MCF 10A (cell line): ENCODE measurements at regions of chr4 and their contacts with region 1.

Region 1: DNA sequence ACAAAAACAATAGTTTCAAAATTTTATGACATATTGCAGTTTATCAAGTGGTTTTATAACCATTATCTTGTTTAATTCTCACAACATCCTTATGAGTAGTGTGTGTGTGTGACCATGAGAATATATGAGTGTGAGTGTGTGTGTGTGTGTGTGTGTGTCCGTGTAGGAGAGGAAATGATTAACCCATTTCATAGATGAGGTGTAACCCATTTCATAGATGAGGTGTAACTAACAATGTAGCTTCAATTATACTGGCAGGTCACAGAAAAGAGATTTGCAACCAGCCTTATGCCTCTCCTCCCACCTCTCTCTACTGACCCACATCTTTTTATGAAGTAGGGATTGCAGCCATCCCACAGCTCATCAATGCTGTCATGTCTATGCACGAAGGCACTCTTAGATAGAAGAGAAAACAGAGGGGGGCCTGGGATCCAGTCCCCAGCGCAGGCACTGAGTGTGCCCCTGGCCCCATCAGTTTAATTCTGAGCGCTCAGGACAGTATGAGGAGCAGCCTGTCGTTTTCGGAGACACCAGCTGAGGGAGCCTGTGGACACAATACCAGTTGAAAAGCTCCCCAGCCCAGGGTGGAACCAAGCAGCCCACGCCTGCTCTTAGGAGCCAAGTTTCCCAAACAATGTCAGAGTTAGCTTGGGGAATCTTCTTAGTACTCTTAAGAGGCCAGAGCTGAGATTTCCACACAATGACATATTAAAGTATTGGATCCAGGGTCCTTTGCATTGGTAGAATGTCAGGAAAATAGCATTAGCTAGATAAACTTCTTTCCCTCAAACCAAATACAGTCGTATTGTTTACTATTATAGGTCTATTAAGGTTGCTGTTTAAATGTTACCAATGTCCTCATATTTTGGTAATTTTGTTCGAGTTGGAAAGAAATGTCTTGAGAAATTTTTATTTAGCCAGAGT is 88.6 kb downstream of the PALLD start:
- DNase-seq: peak; percentile 89
- H3K4me3 Mint-ChIP-seq: no peak overlapping the region
- H3K27ac Mint-ChIP-seq: no peak overlapping the region
- H3K4me1 Mint-ChIP-seq: peaks cover 45% of the 10 kb centered on the region
- H3K27me3 Mint-ChIP-seq: no peaks in the 10 kb centered on the region
- CTCF ChIP-seq: peak; percentile 84

Region 2: DNA sequence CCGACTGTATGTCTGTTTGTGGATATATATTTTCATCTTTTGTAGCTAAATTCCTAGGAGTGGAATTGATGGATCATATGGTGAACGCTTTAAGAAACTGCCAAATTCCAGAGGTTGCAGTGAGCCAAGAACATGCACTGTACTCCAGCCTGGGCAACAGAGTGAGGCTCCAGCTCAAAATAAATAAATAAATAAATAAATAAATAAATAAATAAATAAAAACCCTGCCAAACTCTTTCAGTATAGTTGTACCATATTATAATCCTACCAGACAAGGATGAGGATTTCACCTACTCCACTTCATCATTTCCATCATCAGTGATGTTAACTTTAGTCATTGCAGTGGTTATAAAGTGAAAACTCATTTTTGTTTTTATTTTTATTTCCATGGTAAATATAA is 818.1 kb before region 1 on chr4:
- CTCF ChIA-PET with region 1: no interaction called
- POLR2A ChIA-PET with region 1: no interaction called
- intact Hi-C with region 1: no loop called
- DNase-seq: no peak
- H3K4me3 Mint-ChIP-seq: no peak overlapping the region
- H3K27ac Mint-ChIP-seq: no peak overlapping the region
- H3K4me1 Mint-ChIP-seq: no peaks in the 10 kb centered on the region
- H3K27me3 Mint-ChIP-seq: no peaks in the 10 kb centered on the region
- CTCF ChIP-seq: no peak

Region 3: GRCh38 chr4:168098257-168098717 is 487.1 kb before region 1 on chr4:
- CTCF ChIA-PET with region 1: no interaction called
- POLR2A ChIA-PET with region 1: no interaction called
- intact Hi-C with region 1: no loop called
- DNase-seq: peak; percentile 52
- H3K4me3 Mint-ChIP-seq: no peak overlapping the region
- H3K27ac Mint-ChIP-seq: no peak overlapping the region
- H3K4me1 Mint-ChIP-seq: peaks cover 7% of the 10 kb centered on the region
- H3K27me3 Mint-ChIP-seq: no peaks in the 10 kb centered on the region
- CTCF ChIP-seq: no peak

Region 4: GRCh38 chr4:168499241-168499640 is 86.2 kb before region 1 on chr4:
- CTCF ChIA-PET with region 1: no interaction called
- POLR2A ChIA-PET with region 1: no interaction called
- intact Hi-C with region 1: no loop called
- DNase-seq: no peak
- H3K4me3 Mint-ChIP-seq: no peak overlapping the region
- H3K27ac Mint-ChIP-seq: no peak overlapping the region
- H3K4me1 Mint-ChIP-seq: peaks cover 5% of the 10 kb centered on the region
- H3K27me3 Mint-ChIP-seq: no peaks in the 10 kb centered on the region
- CTCF ChIP-seq: no peak

Region 5: GRCh38 chr4:168560184-168560827 is 25.1 kb before region 1 on chr4:
- CTCF ChIA-PET with region 1: interaction called, 12 read pairs
- POLR2A ChIA-PET with region 1: no interaction called
- intact Hi-C with region 1: no loop called
- DNase-seq: peak; percentile 33
- H3K4me3 Mint-ChIP-seq: no peak overlapping the region
- H3K27ac Mint-ChIP-seq: no peak overlapping the region
- H3K4me1 Mint-ChIP-seq: peaks cover 20% of the 10 kb centered on the region
- H3K27me3 Mint-ChIP-seq: no peaks in the 10 kb centered on the region
- CTCF ChIP-seq: no peak

Region 6: GRCh38 chr4:168631241-168632162 is 46.1 kb after region 1 on chr4:
- CTCF ChIA-PET with region 1: interaction called, 31 read pairs
- POLR2A ChIA-PET with region 1: interaction called, 44 read pairs
- intact Hi-C with region 1: loop called (anchors 1 kb)
- DNase-seq: peak; percentile 69
- H3K4me3 Mint-ChIP-seq: peak overlapping the region; percentile 79
- H3K27ac Mint-ChIP-seq: peak overlapping the region; percentile 24
- H3K4me1 Mint-ChIP-seq: peaks cover 41% of the 10 kb centered on the region
- H3K27me3 Mint-ChIP-seq: no peaks in the 10 kb centered on the region
- CTCF ChIP-seq: peak; percentile 26

Region 7: DNA sequence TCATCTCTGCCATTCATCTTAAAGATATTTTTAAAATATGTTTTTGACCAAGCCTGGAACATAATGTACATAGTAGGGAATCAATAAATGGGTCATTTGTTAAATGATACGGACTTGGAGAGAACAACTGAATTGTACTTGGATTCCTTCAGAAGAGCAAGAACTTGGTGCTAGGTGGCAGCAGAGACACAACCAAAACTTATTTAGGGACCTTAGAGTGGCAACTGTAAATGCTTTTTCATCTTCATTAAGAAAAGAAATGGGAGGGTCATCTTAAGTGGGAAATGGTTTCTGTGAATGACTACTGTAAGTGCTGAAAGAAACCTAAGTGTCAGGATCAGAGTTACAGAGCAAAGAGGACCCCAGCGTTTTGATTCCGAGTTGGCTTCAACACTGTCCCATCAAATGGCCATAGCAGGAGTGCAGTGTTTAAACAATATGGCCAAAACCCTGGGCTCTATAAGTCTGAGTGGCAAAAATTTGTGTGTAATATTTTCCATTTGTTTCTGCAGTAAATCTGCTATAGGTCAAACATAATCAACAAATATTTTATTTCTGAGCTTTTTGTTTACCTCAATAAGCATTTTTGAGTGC is 125.0 kb after region 1 on chr4:
- CTCF ChIA-PET with region 1: interaction called, 33 read pairs
- POLR2A ChIA-PET with region 1: interaction called, 3 read pairs
- intact Hi-C with region 1: loop called (anchors 1 kb)
- DNase-seq: peak; percentile 58
- H3K4me3 Mint-ChIP-seq: no peak overlapping the region
- H3K27ac Mint-ChIP-seq: peak overlapping the region; percentile 46
- H3K4me1 Mint-ChIP-seq: peaks cover 16% of the 10 kb centered on the region
- H3K27me3 Mint-ChIP-seq: no peaks in the 10 kb centered on the region
- CTCF ChIP-seq: peak; percentile 59

Region 8: GRCh38 chr4:168900080-168900479 is 314.6 kb after region 1 on chr4:
- CTCF ChIA-PET with region 1: interaction called, 10 read pairs
- POLR2A ChIA-PET with region 1: interaction called, 3 read pairs
- intact Hi-C with region 1: no loop called
- DNase-seq: peak; percentile 14
- H3K4me3 Mint-ChIP-seq: no peak overlapping the region
- H3K27ac Mint-ChIP-seq: peak overlapping the region; percentile 66
- H3K4me1 Mint-ChIP-seq: peaks cover 6% of the 10 kb centered on the region
- H3K27me3 Mint-ChIP-seq: no peaks in the 10 kb centered on the region
- CTCF ChIP-seq: no peak

Region 9: DNA sequence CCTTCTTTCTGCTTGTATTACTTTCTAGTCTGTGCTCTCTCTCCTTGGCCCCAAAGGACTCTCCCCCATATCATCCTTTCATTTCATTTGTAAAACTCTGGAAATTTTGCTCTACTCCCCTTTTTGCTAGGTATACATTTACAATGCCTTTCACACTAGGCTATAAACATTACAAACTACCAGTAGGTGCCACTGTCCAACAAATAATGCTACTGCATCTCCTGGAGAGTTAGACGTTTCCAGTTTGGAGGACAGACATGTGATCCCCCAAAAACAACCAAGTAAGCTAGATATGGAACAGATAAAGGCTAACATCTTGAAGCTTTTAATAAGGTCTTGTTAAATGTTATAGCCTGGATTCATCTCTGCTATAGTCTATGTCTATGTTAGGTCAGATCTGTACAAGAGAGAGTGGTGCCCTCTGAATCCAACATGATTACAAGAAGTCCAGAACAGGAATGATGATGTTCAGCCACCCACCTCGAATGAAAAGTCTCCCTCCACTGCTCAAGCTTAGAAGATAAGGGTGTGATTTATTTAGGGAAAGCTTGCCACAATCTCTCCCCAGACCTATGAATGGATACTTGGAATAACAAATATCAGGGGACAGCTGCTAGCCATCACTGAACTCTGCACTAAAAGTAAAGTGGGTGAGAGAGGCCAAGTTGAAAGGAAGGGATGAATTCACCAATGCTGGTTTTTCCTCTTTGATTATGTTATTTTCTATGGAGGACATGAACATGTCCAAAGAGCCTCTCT is 410.3 kb after region 1 on chr4:
- CTCF ChIA-PET with region 1: no interaction called
- POLR2A ChIA-PET with region 1: no interaction called
- intact Hi-C with region 1: loop called (anchors 5 kb)
- DNase-seq: peak; percentile 17
- H3K4me3 Mint-ChIP-seq: no peak overlapping the region
- H3K27ac Mint-ChIP-seq: no peak overlapping the region
- H3K4me1 Mint-ChIP-seq: peaks cover 17% of the 10 kb centered on the region
- H3K27me3 Mint-ChIP-seq: no peaks in the 10 kb centered on the region
- CTCF ChIP-seq: peak; percentile 20